Dorsolateral prefrontal cortex (tissue), 120 donors: ENCODE measurements at regions of chr5 and their contacts with region 1.

Region 1: GRCh38 chr5:163408311-163408923 is 29.0 kb upstream of the CCNG1 start:
- DNase-seq: peak in 9 of 10 donors; percentile 32 to 76 (median 69)
- H3K4me3 ChIP-seq: peak overlapping the region in 53 of 59 donors; percentile 1 to 62 (median 37)
- H3K27ac ChIP-seq: peak overlapping the region in 49 of 59 donors; percentile 1 to 83 (median 54)
- H3K27me3 ChIP-seq: no peaks in the 10 kb centered on the region
- CTCF ChIP-seq: peak; percentile 82 to 99 (median 94)

Region 2: DNA sequence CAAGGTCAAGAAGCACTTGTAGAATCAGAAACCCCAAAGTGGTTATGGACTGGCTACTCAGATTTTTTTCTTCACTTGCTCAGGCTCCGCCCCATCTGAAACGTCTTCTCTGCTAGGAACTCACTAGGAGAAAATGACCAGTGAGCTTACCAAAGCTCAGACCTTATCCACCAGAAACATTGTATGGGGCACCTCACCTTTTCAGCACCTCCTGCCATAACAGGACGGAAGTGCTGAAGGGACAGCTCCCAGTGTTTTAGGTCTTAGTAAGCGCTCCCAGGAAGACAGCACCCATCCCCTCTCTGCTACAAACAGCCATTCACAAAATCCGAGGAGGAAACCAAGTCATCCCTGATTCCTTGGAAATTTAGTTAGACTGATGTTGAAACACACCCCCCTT is 1561.7 kb before region 1 on chr5:
- intact Hi-C with region 1: loop called in 1 of 2 experiments (anchors 5 kb)
- DNase-seq: peak in 1 of 10 donors; percentile 52
- H3K4me3 ChIP-seq: peak overlapping the region in 57 of 59 donors; percentile 33 to 73 (median 53)
- H3K27ac ChIP-seq: peak overlapping the region in 50 of 59 donors; percentile 11 to 90 (median 74)
- H3K27me3 ChIP-seq: peaks cover 0 to 35% (median 5%) of the 10 kb centered on the region in 45 donors
- CTCF ChIP-seq: no peak

Region 3: GRCh38 chr5:163306421-163306820 is 102.0 kb before region 1 on chr5:
- intact Hi-C with region 1: loop called in 1 of 2 experiments (anchors 5 kb)
- DNase-seq: no peak
- H3K4me3 ChIP-seq: no peak overlapping the region
- H3K27ac ChIP-seq: no peak overlapping the region
- H3K27me3 ChIP-seq: no peaks in the 10 kb centered on the region
- CTCF ChIP-seq: peak in 36 of 56 donors; percentile 7 to 46 (median 25)

Region 4: GRCh38 chr5:163437309-163438182 is 29.1 kb after region 1 on chr5 and contains the start of gene CCNG1:
- intact Hi-C with region 1: no loop called
- DNase-seq: peak; percentile 87 to 97 (median 96)
- H3K4me3 ChIP-seq: peak within 1 kb of the TSS; percentile 70 to 98 (median 91)
- H3K27ac ChIP-seq: peak within 1 kb of the TSS; percentile 49 to 96 (median 85)
- H3K27me3 ChIP-seq: no peaks in the 10 kb centered on the region
- CTCF ChIP-seq: peak in 20 of 56 donors; percentile 3 to 49 (median 15)
- total RNA-seq, gene CCNG1: 30.0 to 88.2 (median 49.4) TPM